Thyroid gland (tissue), 4 donors: ENCODE measurements at regions of chr10 and their contacts with region 1.

Region 1: GRCh38 chr10:75208181-75208580 is 2.4 kb upstream of the VDAC2 start:
- DNase-seq: peak in 1 of 2 donors; percentile 26
- H3K4me3 ChIP-seq: no peak overlapping the region
- H3K27ac ChIP-seq: no peak overlapping the region
- H3K4me1 ChIP-seq: peaks cover 14 to 27% of the 10 kb centered on the region in 2 donors
- H3K27me3 ChIP-seq: no peaks in the 10 kb centered on the region
- CTCF ChIP-seq: no peak
- POLR2A ChIP-seq: no peak

Region 2: DNA sequence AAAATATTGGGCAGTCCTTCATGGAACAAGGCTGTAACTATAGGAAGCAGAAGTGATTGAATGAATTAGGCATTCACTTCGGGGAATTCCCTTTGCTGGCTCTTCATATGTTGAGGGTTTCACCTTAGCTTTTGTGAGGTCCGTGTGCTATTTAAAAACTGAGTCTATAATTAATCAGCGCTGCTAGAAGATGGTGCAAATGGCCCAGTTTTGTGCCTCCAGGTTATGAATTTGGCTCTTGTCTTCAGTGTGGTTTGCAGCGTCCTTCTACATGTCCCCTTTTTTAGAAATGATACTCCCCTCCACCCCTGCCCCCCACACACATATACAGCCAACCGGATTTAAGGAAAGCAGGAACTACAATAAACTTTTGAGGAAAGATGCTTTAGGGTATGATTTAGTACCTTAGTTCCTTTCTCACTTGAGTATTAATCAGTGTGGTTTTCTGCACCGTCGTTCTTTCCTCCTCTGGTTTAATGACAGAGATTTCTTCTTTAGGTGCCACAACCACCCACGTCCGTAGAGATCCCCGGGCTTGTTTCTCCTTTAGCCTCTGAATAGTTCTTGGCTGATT is 207.3 kb before region 1 on chr10:
- intact Hi-C with region 1: no loop called
- DNase-seq: no peak
- H3K4me3 ChIP-seq: no peak overlapping the region
- H3K27ac ChIP-seq: no peak overlapping the region
- H3K4me1 ChIP-seq: peaks cover 11 to 22% of the 10 kb centered on the region in 2 donors
- H3K27me3 ChIP-seq: no peaks in the 10 kb centered on the region
- CTCF ChIP-seq: no peak
- POLR2A ChIP-seq: no peak

Region 3: GRCh38 chr10:75111367-75111906 is 96.7 kb before region 1 on chr10 and contains the start of gene SAMD8:
- intact Hi-C with region 1: loop called (anchors 5 kb)
- DNase-seq: peak; percentile 96 to 97
- H3K4me3 ChIP-seq: peak within 1 kb of the TSS; percentile 92 to 98 (median 98)
- H3K27ac ChIP-seq: peak within 1 kb of the TSS; percentile 95 to 99 (median 98)
- H3K4me1 ChIP-seq: peaks cover 4 to 10% of the 10 kb centered on the region in 2 donors
- H3K27me3 ChIP-seq: no peaks in the 10 kb centered on the region
- CTCF ChIP-seq: peak in 3 of 6 experiments; percentile 20 to 50 (median 31)
- POLR2A ChIP-seq: peak; percentile 58 to 90
- total RNA-seq, gene SAMD8: 19.9 to 36.8 (median 28.4) TPM